Activated CD8-positive, alpha-beta memory T cell treated with anti-CD3 and anti-CD28 coated beads, Interleukin-2, amount 10 ng/mL, durations not matched to agents 7 days and 5 days (primary cell): ENCODE measurements at regions of chr17 and their contacts with region 1.

Region 1: GRCh38 chr17:42221937-42222745 is 27.8 kb upstream of the GHDC start:
- DNase-seq: peak; percentile 68
- ATAC-seq: peak; percentile 83
- H3K4me3 Mint-ChIP-seq: no peak overlapping the region
- H3K27ac Mint-ChIP-seq: peak overlapping the region; percentile 52
- H3K4me1 Mint-ChIP-seq: peaks cover 4% of the 10 kb centered on the region
- H3K27me3 Mint-ChIP-seq: no peaks in the 10 kb centered on the region

Region 2: DNA sequence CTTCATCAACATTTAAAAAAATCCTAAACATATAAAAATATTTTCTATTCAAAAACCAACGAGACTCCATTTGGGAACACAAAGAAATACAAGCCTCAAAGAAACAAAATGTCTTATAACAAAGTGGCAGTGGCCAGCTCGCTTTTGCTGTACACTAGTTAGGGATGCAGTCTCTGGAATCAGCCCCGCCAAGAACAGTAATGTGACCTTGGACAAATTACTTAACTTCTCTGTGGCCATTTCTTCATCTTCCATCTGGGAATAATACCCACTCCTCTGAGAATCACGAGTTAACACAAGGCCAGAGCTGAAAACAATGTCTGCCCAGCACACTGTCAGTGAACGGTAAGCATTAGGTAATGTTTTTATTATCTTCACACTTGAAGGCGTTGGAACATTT is 48.5 kb after region 1 on chr17:
- CTCF ChIA-PET with region 1: interaction called, 17 read pairs
- DNase-seq: no peak
- ATAC-seq: no peak
- H3K4me3 Mint-ChIP-seq: no peak overlapping the region
- H3K27ac Mint-ChIP-seq: peak overlapping the region; percentile 91
- H3K4me1 Mint-ChIP-seq: peaks cover 72% of the 10 kb centered on the region
- H3K27me3 Mint-ChIP-seq: no peaks in the 10 kb centered on the region

Region 3: DNA sequence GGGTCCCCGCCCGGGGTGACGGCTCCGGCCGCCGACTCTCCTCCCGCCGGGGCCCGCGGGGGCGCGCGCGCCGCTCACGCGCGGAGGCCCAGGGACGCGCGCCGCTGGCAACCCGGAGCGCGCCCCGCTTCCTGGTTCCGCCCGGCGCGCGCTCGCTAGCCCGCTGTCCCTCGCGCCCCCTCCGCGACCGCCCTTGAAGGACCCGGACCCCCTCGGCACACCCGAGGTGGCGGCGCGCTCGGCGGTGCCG is 54.1 kb after region 1 on chr17 and contains the start of gene STAT5B:
- CTCF ChIA-PET with region 1: interaction called, 17 read pairs
- DNase-seq: peak; percentile 78
- ATAC-seq: peak; percentile 75
- H3K4me3 Mint-ChIP-seq: peak within 1 kb of the TSS; percentile 98
- H3K27ac Mint-ChIP-seq: peak within 1 kb of the TSS; percentile 91
- H3K4me1 Mint-ChIP-seq: peaks cover 47% of the 10 kb centered on the region
- H3K27me3 Mint-ChIP-seq: no peaks in the 10 kb centered on the region
- total RNA-seq, gene STAT5B: 112 to 116 TPM

Region 4: DNA sequence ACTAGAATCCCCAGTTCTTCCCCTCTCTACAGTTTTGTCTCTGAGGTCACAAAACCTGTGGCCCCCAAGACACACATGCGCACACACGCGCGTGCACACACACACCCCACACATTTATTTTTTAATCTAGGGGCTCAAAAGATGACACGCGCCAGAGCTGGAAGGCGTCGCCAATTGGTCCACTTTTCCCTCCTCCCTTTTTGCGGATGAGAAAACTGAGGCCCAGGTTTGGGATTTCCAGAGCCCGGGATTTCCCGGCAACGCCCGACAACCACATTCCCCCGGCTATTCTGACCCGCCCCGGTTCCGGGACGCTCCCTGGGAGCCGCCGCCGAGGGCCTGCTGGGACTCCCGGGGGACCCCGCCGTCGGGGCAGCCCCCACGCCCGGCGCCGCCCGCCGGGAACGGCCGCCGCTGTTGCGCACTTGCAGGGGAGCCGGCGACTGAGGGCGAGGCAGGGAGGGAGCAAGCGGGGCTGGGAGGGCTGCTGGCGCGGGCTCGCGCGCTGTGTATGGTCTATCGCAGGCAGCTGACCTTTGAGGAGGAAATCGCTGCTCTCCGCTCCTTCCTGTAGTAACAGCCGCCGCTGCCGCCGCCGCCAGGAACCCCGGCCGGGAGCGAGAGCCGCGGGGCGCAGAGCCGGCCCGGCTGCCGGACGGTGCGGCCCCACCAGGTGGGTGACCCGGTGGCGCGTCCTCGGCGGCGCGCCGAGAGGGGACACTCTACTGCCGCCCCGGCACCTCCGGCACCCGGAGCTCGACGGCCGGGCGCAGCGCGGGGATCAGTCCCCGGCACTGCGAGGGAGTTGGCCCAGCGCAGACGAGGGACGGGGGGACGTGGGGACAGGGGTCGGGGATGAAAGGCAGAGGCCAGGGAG is 66.0 kb after region 1 on chr17 and contains the start of gene STAT5A:
- CTCF ChIA-PET with region 1: interaction called, 24 read pairs
- DNase-seq: peak; percentile 91
- ATAC-seq: peak; percentile 84
- H3K4me3 Mint-ChIP-seq: peak within 1 kb of the TSS; percentile 96
- H3K27ac Mint-ChIP-seq: peak within 1 kb of the TSS; percentile 97
- H3K4me1 Mint-ChIP-seq: peaks cover 57% of the 10 kb centered on the region
- H3K27me3 Mint-ChIP-seq: no peaks in the 10 kb centered on the region
- total RNA-seq, gene STAT5A: 118 to 127 TPM